ENCODE measurements at regions of chr4 and their contacts with region 1.

Region 1: GRCh38 chr4:18021722-18022571 is at the start of gene LCORL:
- DNase-seq: peak; percentile 84 to 91 (median 87)
- H3K4me3 ChIP-seq: peak within 1 kb of the TSS; percentile 68 to 87
- H3K4me3 Mint-ChIP-seq: peak within 1 kb of the TSS; percentile 92 to 98 (median 96)
- H3K27ac ChIP-seq: peak within 1 kb of the TSS; percentile 61
- H3K27ac Mint-ChIP-seq: peak within 1 kb of the TSS; percentile 86 to 97 (median 90)
- H3K4me1 ChIP-seq: peaks cover 24% of the 10 kb centered on the region
- H3K4me1 Mint-ChIP-seq: peaks cover 12 to 33% (median 20%) of the 10 kb centered on the region in 4 donors
- H3K27me3 ChIP-seq: peaks cover 4% of the 10 kb centered on the region
- H3K27me3 Mint-ChIP-seq: peaks cover 6 to 26% of the 10 kb centered on the region in 2 donors
- total RNA-seq, gene LCORL: 11.3 to 14.5 TPM

Region 2: DNA sequence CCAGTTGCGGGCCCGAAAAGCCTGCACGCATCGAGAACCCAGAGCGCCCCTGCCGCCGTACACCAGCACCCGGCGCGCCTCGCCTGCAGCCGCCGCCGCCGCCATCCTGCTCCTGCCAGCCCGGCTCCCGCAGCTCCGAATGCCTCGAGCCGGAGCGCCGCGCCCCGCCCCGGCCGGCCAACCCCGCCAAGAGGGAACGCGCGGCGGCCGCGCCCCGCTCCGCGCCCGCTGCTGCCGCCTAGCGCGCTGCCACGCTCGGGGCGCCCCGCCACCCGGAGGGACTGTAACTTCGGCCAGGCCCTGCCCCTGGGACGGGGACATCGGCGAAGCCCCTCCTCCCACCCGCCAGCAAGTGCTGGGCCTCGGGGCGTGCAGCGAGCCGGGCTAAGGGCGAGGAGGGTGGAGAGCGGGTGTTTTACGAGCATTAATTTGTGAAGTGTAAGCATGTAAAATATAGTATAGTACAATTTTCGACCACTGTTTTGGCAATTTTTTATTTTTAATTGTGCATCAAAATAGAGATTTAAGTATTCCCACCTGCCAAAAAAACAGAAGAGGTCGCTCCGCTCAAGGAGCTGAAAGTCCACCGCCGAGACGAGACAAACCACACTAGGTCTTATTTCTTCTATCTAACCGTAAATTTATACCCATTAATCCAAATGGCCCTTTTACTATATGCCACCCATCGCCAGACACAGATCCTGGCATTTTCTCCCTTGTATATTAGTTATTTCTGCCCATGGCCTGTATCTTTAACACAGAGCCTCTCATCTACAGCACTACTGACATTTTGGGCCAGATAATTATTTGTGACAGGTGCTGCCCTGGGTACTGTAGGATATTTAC is 509.8 kb before region 1 on chr4 and contains the start of gene QDPR:
- CTCF ChIA-PET with region 1: no interaction called
- POLR2A ChIA-PET with region 1: no interaction called
- intact Hi-C with region 1: loop called (anchors 1 kb)
- DNase-seq: peak; percentile 60 to 70 (median 70)
- H3K4me3 ChIP-seq: peak within 1 kb of the TSS; percentile 38 to 75
- H3K4me3 Mint-ChIP-seq: peak within 1 kb of the TSS; percentile 96 to 100 (median 98)
- H3K27ac ChIP-seq: peak within 1 kb of the TSS; percentile 46
- H3K27ac Mint-ChIP-seq: peak within 1 kb of the TSS; percentile 74 to 96 (median 91)
- H3K4me1 ChIP-seq: peaks cover 28% of the 10 kb centered on the region
- H3K4me1 Mint-ChIP-seq: peaks cover 23 to 32% (median 30%) of the 10 kb centered on the region in 4 donors
- H3K27me3 ChIP-seq: no peaks in the 10 kb centered on the region
- H3K27me3 Mint-ChIP-seq: peaks cover 9% of the 10 kb centered on the region in 2 donors
- total RNA-seq, gene QDPR: 21.8 to 24.4 TPM

Region 3: GRCh38 chr4:17614416-17615299 is 407.3 kb before region 1 on chr4 and contains the start of gene MED28:
- CTCF ChIA-PET with region 1: no interaction called
- POLR2A ChIA-PET with region 1: no interaction called
- intact Hi-C with region 1: loop called (anchors 2 kb)
- DNase-seq: peak; percentile 92 to 96 (median 94)
- H3K4me3 ChIP-seq: peak within 1 kb of the TSS; percentile 82 to 100
- H3K4me3 Mint-ChIP-seq: peak within 1 kb of the TSS; percentile 95 to 100 (median 99)
- H3K27ac ChIP-seq: peak within 1 kb of the TSS; percentile 95
- H3K27ac Mint-ChIP-seq: peak within 1 kb of the TSS; percentile 95 to 100 (median 96)
- H3K4me1 ChIP-seq: peaks cover 45% of the 10 kb centered on the region
- H3K4me1 Mint-ChIP-seq: peaks cover 25 to 61% (median 44%) of the 10 kb centered on the region in 4 donors
- H3K27me3 ChIP-seq: no peaks in the 10 kb centered on the region
- H3K27me3 Mint-ChIP-seq: no peaks in the 10 kb centered on the region
- total RNA-seq, gene MED28: 85.4 to 87.0 TPM

Region 4: DNA sequence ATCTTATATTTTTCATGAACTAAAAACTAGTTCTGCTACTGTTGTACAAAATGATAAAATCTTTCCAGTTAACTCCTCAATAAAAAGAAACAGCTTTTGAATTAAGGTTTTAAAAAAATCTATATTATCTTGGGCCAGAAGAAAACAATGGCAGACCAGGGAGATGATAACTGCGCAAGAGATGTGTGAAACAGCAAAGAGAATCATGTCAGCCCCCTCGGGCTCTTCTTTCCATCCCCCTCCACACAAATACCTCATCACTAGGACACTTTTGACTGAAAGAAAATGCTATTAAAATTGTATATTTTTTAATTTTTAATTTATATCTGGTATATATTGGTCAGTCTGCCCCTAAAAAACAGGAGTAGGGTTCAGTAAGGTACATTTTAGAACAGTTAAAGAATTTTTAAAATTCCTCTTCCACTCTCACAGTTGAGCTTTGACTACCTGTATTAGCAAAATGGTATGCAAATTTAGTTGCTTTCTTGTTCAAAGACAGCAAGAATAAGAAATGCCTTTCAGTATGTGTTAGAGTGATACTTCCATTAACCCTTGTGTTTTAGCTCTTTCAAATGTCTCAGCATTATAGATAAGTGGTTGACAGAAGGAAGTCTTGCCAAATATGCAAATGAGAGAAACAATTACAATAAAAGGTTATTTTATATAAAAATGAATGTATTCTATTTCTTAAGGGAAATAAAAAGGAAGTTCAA is 36.0 kb after region 1 on chr4:
- CTCF ChIA-PET with region 1: no interaction called
- POLR2A ChIA-PET with region 1: no interaction called
- intact Hi-C with region 1: loop called (anchors 1 kb)
- DNase-seq: no peak
- H3K4me3 ChIP-seq: no peak overlapping the region
- H3K4me3 Mint-ChIP-seq: peak overlapping the region in 4 of 8 donors; percentile 24 to 42 (median 30)
- H3K27ac ChIP-seq: no peak overlapping the region
- H3K27ac Mint-ChIP-seq: no peak overlapping the region
- H3K4me1 ChIP-seq: peaks cover 23% of the 10 kb centered on the region
- H3K4me1 Mint-ChIP-seq: peaks cover 6 to 24% (median 16%) of the 10 kb centered on the region in 4 donors
- H3K27me3 ChIP-seq: peaks cover 5% of the 10 kb centered on the region
- H3K27me3 Mint-ChIP-seq: peaks cover 22 to 23% of the 10 kb centered on the region in 2 donors

Measured in CD4-positive, alpha-beta memory T cell (primary cell).